Left colon (tissue), 2 donors: ENCODE measurements at regions of chr17 and their contacts with region 1.

Region 1: GRCh38 chr17:16037636-16038035 is 38.0 kb downstream of the TTC19 start:
- DNase-seq: no peak
- ATAC-seq: no peak

Region 2: GRCh38 chr17:15883617-15884111 is 154.0 kb before region 1 on chr17:
- intact Hi-C with region 1: no loop called
- DNase-seq: no peak
- ATAC-seq: no peak

Region 3: DNA sequence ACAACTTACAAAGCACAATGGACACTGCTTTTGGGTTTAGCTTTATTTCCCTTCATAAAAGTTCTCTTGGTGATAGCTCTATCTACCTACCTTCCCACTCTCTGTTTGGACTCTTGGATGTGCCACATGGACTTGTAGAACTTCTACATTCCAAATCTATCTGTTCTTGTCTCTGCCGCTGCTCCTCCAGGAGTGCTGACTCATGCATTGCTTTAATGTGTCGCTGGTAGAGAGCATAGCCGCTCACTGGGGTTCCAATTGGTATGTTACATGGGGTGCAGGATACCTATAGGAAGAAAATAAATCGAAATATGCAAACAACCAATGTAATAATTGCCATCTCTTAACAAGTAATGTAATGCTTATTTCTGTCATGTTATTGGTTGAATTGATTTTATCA is 54.1 kb after region 1 on chr17:
- intact Hi-C with region 1: loop called in 1 of 2 experiments (anchors 10 kb)
- DNase-seq: no peak
- ATAC-seq: no peak